GM12878 (cell line): ENCODE measurements at regions of chr2 and their contacts with region 1.

Region 1: GRCh38 chr2:7758073-7758759 is 841.0 kb downstream of the RNF144A start:
- DNase-seq: peak; percentile 39
- ATAC-seq: peak; percentile 83
- H3K4me3 ChIP-seq: no peak overlapping the region
- H3K27ac ChIP-seq: 0 out of 2 replicates have a peak overlapping the region, but pooled peaks have one; percentile 11
- H3K4me1 ChIP-seq: peaks cover 4% of the 10 kb centered on the region; the same call in 1 of the 2 replicates
- H3K27me3 ChIP-seq: no peaks in the 10 kb centered on the region
- CTCF ChIP-seq: no peak
- EP300 ChIP-seq: peak; percentile 69 to 71; a peak in 2 of 4 replicates
- POLR2A ChIP-seq: no peak
- RAD21 ChIP-seq: no peak

Region 2: GRCh38 chr2:7736646-7737305 is 21.4 kb before region 1 on chr2:
- CTCF ChIA-PET with region 1: interaction called, 4 read pairs
- POLR2A ChIA-PET with region 1: no interaction called
- RAD21 ChIA-PET with region 1: interaction called, 7 read pairs
- SMC1A ChIA-PET with region 1: interaction called, 10 read pairs
- in situ Hi-C with region 1: no loop called
- intact Hi-C with region 1: no loop called
- DNase-seq: no peak
- ATAC-seq: peak; percentile 33
- H3K4me3 ChIP-seq: no peak overlapping the region
- H3K27ac ChIP-seq: no peak overlapping the region
- H3K4me1 ChIP-seq: no peaks in the 10 kb centered on the region
- H3K27me3 ChIP-seq: no peaks in the 10 kb centered on the region
- CTCF ChIP-seq: no peak
- EP300 ChIP-seq: no peak
- POLR2A ChIP-seq: no peak
- RAD21 ChIP-seq: no peak